ENCODE measurements at regions of chr1 and their contacts with region 1.

Region 1: DNA sequence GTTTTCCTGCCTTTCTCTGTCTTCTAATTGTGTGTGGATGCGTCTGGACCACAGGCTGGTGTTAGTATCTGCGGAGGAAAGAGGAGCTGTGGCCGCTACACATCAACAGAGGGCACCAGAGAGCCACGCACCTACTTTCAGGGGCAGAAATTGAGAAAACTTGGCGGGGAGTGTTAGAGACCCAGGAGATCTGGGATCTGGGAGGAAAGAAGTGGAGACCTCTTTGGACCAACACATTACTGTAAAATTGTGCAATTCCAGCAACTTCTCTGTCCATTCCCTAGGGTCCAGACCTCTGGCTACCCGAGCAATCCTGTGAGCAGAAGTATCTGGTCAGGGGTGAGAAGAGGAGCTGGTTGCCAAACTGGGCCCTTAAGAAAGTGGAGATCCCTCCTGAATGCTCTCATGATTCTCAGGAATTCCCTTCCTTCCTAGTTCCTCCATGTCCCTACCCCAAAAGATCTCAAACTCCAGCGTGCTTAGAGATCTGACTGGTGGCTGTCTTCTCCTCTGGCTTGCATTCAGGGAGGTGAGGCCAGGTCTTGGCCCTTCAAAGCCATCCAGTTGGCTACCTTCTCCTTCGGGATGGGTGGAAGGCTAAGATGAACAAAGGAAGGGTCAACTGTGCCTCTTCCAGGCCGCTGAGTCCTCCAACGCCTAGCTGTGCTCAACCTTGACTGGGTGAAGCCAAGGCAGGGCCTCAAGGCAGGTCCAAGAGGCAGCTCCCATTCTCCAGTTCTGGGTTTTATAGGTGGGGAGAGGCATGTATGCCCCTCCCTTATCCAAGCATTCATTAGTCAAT is 1.2 kb upstream of the KIRREL1 start:
- DNase-seq: peak; percentile 80
- ATAC-seq: peak; percentile 74

Region 2: DNA sequence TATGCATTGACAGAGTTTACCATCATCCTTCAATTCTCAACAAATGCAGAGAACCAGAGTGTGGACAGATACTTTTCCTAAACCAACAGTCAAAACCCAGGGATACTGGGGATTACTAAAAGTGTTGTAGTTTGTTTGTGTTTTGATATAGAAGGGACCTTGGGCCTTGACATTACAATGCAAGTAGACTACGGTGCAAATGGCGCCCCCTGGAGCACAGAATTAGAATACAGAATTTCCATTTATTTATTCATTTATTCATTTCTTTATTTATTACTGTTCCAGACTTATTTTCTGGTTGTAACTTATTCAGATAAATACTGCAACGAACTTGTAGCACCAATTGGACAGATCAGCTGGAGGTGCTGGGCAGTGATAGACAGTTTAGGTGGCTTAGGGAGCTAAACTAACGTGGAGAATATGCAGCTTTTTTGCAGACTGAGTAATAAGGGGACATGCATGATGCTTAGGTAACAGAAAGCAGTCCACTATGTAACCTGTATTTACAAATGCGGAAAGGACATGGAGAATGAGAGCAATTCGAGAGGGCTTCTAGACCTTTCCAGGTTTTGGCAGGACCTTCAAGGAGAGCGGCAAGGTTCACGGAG is 43.8 kb after region 1 on chr1:
- intact Hi-C with region 1: loop called (anchors 5 kb)
- DNase-seq: no peak
- ATAC-seq: peak; percentile 65

Region 3: DNA sequence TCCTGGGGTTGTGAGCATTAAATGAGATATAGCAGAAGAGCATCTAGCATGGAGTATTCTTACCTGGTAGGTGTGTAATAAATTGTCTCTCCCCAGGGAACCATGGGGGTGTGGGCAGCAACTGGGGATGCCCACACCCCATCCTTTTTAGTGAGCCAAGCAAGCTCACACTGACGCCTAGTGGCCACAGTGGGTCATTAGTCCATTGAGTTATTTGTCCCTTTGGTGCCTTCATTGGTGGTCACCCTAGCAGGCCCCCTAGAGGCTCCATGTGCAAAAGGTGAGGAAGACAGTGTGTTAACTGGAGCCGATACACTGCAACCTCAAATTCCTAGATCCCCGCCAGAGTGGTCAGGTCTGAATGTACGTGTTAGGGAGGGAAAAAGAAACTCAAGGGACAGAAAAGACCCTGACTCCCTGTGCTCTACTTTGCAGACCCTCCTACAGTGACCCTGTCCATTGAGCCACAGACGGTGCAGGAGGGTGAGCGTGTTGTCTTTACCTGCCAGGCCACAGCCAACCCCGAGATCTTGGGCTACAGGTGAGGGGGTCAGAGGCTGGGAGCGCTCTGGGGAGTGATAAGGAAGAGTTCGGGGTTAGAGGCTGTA is 95.2 kb after region 1 on chr1:
- intact Hi-C with region 1: loop called (anchors 10 kb)
- DNase-seq: peak; percentile 43
- ATAC-seq: peak; percentile 57

Region 4: DNA sequence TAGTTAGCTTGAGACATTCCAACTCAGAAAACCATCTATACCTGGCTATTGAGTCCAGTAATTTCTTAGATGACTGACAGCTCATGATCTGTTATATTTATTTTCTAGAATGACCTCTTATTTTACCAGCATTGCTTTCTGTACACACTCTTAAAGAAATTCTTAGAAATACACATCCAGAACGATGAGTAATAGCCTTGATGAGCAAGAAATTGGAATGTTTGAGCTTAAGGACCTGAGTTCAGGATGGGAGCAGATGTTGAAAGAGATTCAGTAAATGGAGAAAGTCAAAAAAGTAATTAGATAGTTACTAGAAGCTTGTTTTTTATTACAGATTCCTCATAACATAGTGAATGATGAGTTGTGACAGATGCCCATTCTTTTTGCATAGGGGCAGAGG is 950.8 kb after region 1 on chr1:
- intact Hi-C with region 1: no loop called
- DNase-seq: no peak
- ATAC-seq: no peak